HCT116 (cell line): ENCODE measurements at regions of chr7 and their contacts with region 1.

Region 1: DNA sequence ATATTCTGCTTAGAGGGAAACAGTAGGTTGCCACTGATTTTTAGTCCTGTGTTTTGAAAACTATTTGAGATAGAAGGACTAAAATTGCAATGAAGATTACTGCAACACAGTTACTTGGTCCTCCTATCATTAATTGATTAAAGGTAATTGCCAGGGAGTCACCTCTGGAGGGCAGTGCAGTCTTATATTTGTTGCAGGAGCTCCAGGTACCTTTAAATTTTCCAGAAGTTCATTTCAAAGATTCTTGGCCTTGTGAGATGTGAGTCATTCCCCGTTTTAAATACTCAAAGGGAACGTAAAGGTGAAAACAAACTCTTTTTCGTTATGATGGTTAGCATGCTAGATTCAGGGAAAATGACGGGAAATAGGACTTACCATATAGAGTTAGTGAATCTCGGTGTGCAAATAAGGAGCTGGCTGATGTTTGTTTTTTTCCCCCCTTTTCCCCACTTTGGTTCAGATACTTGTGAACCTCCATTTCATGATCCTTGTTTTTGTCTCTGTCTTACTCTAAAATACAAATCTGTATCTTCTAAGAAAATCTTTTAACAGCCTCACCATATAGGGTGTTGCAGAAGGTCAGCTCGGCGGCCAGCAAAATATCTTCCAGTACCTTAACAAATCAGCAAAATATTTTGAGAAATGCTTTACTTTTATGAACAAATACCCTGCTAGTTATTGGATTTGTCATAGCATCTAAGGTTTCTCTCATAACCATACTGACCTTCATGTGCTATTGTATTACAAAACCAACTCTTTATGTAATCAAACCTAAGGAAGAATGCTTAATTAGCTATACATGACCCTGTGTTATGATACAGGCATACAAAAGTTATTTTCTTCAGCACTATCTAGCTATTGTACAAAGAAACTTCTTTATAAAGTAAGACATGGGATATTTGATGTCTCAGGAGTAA is 143.0 kb upstream of the HDAC9 start:
- DNase-seq: peak; percentile 35
- ATAC-seq: peak; percentile 73
- H3K4me3 ChIP-seq: no peak overlapping the region
- H3K27ac ChIP-seq: no peak overlapping the region
- H3K4me1 ChIP-seq: peaks cover 0 to 3% of the 10 kb centered on the region in 2 experiments; a peak in 2 of 4 replicates
- H3K27me3 ChIP-seq: no peaks in the 10 kb centered on the region
- CTCF ChIP-seq: peak; percentile 43 to 76 (median 54); a peak in 4 of 6 replicates
- POLR2A ChIP-seq: no peak
- RAD21 ChIP-seq: peak; percentile 82

Region 2: GRCh38 chr7:18257711-18258110 is 94.9 kb before region 1 on chr7:
- CTCF ChIA-PET with region 1: no interaction called
- POLR2A ChIA-PET with region 1: no interaction called
- RAD21 ChIA-PET with region 1: no interaction called
- intact Hi-C with region 1: no loop called
- DNase-seq: no peak
- ATAC-seq: no peak
- H3K4me3 ChIP-seq: no peak overlapping the region
- H3K27ac ChIP-seq: no peak overlapping the region
- H3K4me1 ChIP-seq: no peaks in the 10 kb centered on the region
- H3K27me3 ChIP-seq: no peaks in the 10 kb centered on the region
- CTCF ChIP-seq: no peak
- POLR2A ChIP-seq: no peak
- RAD21 ChIP-seq: no peak

Region 3: GRCh38 chr7:18508443-18509427 is 156.1 kb after region 1 on chr7:
- CTCF ChIA-PET with region 1: interaction called, 3 read pairs
- POLR2A ChIA-PET with region 1: no interaction called
- RAD21 ChIA-PET with region 1: no interaction called
- intact Hi-C with region 1: loop called (anchors 5 kb)
- DNase-seq: peak; percentile 66
- ATAC-seq: peak; percentile 81
- H3K4me3 ChIP-seq: peak overlapping the region in 1 of 2 experiments; percentile 6; a peak in 2 of 4 replicates
- H3K27ac ChIP-seq: peak overlapping the region; percentile 24; the same call in 1 of the 2 replicates
- H3K4me1 ChIP-seq: peaks cover 12 to 23% of the 10 kb centered on the region in 2 experiments
- H3K27me3 ChIP-seq: no peaks in the 10 kb centered on the region
- CTCF ChIP-seq: no peak
- POLR2A ChIP-seq: no peak
- RAD21 ChIP-seq: no peak

Region 4: GRCh38 chr7:18520450-18521235 is 168.0 kb after region 1 on chr7:
- CTCF ChIA-PET with region 1: no interaction called
- POLR2A ChIA-PET with region 1: no interaction called
- RAD21 ChIA-PET with region 1: no interaction called
- intact Hi-C with region 1: no loop called
- DNase-seq: no peak
- ATAC-seq: no peak
- H3K4me3 ChIP-seq: no peak overlapping the region
- H3K27ac ChIP-seq: no peak overlapping the region
- H3K4me1 ChIP-seq: peaks cover 0 to 7% of the 10 kb centered on the region in 2 experiments; a peak in 1 of 4 replicates
- H3K27me3 ChIP-seq: no peaks in the 10 kb centered on the region
- CTCF ChIP-seq: no peak
- POLR2A ChIP-seq: no peak
- RAD21 ChIP-seq: no peak

Region 5: DNA sequence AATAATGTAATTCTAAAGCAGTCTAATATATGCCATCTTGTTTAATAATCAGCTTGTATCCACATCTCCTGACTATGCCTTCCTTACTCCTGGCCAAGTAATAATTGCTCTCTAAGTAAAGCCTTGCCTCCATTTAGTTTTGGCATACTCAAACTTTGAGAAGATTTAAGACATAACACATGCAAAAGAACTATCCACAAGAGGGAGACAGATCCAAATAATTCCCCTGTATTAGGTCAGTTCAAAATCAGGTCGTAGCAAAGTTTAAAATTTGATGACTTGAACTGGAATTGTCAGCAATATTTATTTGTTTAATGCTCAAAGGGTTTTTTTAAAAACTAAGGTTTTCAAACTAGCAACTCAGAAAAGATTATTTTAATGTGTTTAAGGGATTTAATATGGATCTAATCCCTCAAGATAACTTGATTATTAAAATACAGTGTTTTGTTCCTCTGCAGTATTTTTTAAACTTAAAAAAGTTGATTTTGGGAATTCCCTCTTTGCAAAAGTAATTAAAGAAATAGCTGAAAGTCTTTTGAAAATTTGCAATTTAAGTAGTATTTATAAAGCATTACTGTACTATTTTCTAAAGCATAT is 238.2 kb after region 1 on chr7:
- CTCF ChIA-PET with region 1: interaction called, 11 read pairs
- POLR2A ChIA-PET with region 1: no interaction called
- RAD21 ChIA-PET with region 1: no interaction called
- intact Hi-C with region 1: no loop called
- DNase-seq: peak; percentile 27
- ATAC-seq: peak; percentile 72
- H3K4me3 ChIP-seq: no peak overlapping the region
- H3K27ac ChIP-seq: no peak overlapping the region
- H3K4me1 ChIP-seq: no peaks in the 10 kb centered on the region
- H3K27me3 ChIP-seq: no peaks in the 10 kb centered on the region
- CTCF ChIP-seq: peak; percentile 51 to 67 (median 55); a peak in 4 of 6 replicates
- POLR2A ChIP-seq: no peak
- RAD21 ChIP-seq: peak; percentile 76

Region 6: DNA sequence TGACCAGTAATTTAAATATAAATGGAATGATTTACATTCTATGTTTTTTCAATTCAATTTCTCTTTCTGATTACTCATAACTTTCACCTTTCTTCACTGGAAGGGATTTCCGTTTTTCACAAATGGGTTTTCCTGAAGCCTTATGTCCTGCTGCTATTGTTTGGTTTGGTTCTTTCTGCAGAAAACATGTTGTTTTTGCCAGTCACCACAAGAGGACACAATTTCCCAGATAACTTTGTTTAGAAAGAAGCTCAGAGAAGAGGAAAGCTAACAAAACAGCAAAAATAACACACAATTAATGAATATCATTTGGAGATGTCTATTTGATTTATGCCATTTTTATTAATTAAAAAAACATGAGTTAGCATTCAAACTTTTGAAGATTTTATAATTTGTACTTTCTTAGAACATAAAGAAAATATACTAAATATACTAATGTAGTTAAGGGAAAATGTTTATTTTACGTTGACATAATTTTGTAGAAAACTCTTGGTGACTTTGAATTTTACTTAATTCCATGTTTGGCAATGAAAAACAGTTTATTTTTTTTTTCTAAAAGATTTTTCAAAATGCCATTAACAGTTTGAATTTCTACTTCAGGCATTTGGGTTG is 769.5 kb after region 1 on chr7:
- CTCF ChIA-PET with region 1: interaction called, 3 read pairs
- POLR2A ChIA-PET with region 1: no interaction called
- RAD21 ChIA-PET with region 1: no interaction called
- intact Hi-C with region 1: loop called (anchors 5 kb)
- DNase-seq: peak; percentile 37
- ATAC-seq: peak; percentile 60; the same call in 1 of the 2 replicates
- H3K4me3 ChIP-seq: no peak overlapping the region
- H3K27ac ChIP-seq: no peak overlapping the region
- H3K4me1 ChIP-seq: no peaks in the 10 kb centered on the region
- H3K27me3 ChIP-seq: peaks cover 9% of the 10 kb centered on the region; the same call in 1 of the 2 replicates
- CTCF ChIP-seq: peak; percentile 69 to 80 (median 78)
- POLR2A ChIP-seq: no peak
- RAD21 ChIP-seq: peak; percentile 84

Region 7: GRCh38 chr7:19491821-19492452 is 1139.3 kb after region 1 on chr7:
- CTCF ChIA-PET with region 1: interaction called, 10 read pairs
- POLR2A ChIA-PET with region 1: no interaction called
- RAD21 ChIA-PET with region 1: no interaction called
- intact Hi-C with region 1: no loop called
- DNase-seq: peak; percentile 28
- ATAC-seq: no peak
- H3K4me3 ChIP-seq: no peak overlapping the region
- H3K27ac ChIP-seq: no peak overlapping the region
- H3K4me1 ChIP-seq: no peaks in the 10 kb centered on the region
- H3K27me3 ChIP-seq: no peaks in the 10 kb centered on the region
- CTCF ChIP-seq: peak; percentile 12 to 64 (median 56); a peak in 4 of 6 replicates
- POLR2A ChIP-seq: no peak
- RAD21 ChIP-seq: peak; percentile 25; the same call in 1 of the 2 replicates